ENCODE measurements at regions of chr1 and their contacts with region 1.

Region 1: GRCh38 chr1:3483801-3484444 is 29.5 kb downstream of the ARHGEF16 start:
- DNase-seq: peak; percentile 61 to 89 (median 88)
- ATAC-seq: peak; percentile 84
- H3K4me3 ChIP-seq: no peak overlapping the region
- H3K27ac ChIP-seq: no peak overlapping the region
- H3K4me1 ChIP-seq: peaks cover 0 to 39% of the 10 kb centered on the region in 2 experiments; a peak in 2 of 5 replicates
- H3K27me3 ChIP-seq: peaks cover 12 to 26% of the 10 kb centered on the region in 2 experiments
- CTCF ChIP-seq: peak; percentile 83 to 95 (median 89)
- EP300 ChIP-seq: no peak
- POLR2A ChIP-seq: no peak
- RAD21 ChIP-seq: peak in 1 of 2 experiments; percentile 80; a peak in 3 of 4 replicates

Region 2: GRCh38 chr1:3441410-3441847 is 42.5 kb before region 1 on chr1:
- CTCF ChIA-PET with region 1: interaction called, 4 read pairs
- POLR2A ChIA-PET with region 1: no interaction called
- in situ Hi-C with region 1: loop called (anchors 5 kb)
- intact Hi-C with region 1: no loop called
- DNase-seq: no peak
- ATAC-seq: no peak
- H3K4me3 ChIP-seq: no peak overlapping the region
- H3K27ac ChIP-seq: no peak overlapping the region
- H3K4me1 ChIP-seq: peaks cover 0 to 6% of the 10 kb centered on the region in 2 experiments; a peak in 1 of 5 replicates
- H3K27me3 ChIP-seq: peaks cover 30 to 65% of the 10 kb centered on the region in 2 experiments; a peak in 4 of 5 replicates
- CTCF ChIP-seq: no peak
- EP300 ChIP-seq: no peak
- POLR2A ChIP-seq: no peak
- RAD21 ChIP-seq: no peak

Region 3: DNA sequence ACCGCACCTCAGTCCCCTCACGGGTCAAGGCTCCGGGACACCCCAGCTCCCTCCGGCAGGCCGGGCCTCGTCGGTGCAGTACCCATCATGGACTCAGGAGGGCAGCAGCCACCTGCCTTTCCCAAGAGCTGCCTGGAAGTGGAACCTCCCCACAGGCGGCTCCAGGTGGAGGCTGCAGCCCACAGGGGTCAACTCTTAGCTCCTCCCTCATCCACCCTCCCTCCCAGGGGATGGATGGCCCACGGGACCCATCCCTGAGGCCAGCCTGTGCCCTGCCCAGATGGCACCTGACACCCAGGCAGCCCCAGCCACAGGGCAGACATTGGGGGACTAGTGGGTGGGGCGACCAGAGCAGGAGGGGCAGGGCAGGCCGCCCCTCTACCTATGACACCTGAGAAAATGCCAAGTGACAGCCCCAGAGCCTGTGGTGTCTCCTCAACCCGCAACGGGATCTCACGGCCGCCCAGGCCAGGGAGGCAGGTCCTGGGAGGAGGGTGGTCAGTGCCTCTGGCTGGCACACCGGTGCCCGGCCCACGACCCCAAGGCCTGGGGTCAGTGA is 30.6 kb before region 1 on chr1:
- CTCF ChIA-PET with region 1: interaction called, 91 read pairs
- POLR2A ChIA-PET with region 1: interaction called, 3 read pairs
- in situ Hi-C with region 1: loop called (anchors 5 kb)
- intact Hi-C with region 1: loop called (anchors 1 kb)
- DNase-seq: peak; percentile 84 to 91 (median 90)
- ATAC-seq: peak; percentile 86
- H3K4me3 ChIP-seq: no peak overlapping the region
- H3K27ac ChIP-seq: no peak overlapping the region
- H3K4me1 ChIP-seq: peaks cover 0 to 39% of the 10 kb centered on the region in 2 experiments; a peak in 3 of 5 replicates
- H3K27me3 ChIP-seq: peaks cover 5 to 28% of the 10 kb centered on the region in 2 experiments; a peak in 4 of 5 replicates
- CTCF ChIP-seq: peak; percentile 96 to 98 (median 97)
- EP300 ChIP-seq: no peak
- POLR2A ChIP-seq: no peak
- RAD21 ChIP-seq: peak; percentile 80 to 96

Region 4: GRCh38 chr1:3649342-3650247 is 165.7 kb after region 1 on chr1 and contains the start of gene WRAP73:
- CTCF ChIA-PET with region 1: no interaction called
- POLR2A ChIA-PET with region 1: no interaction called
- in situ Hi-C with region 1: no loop called
- intact Hi-C with region 1: no loop called
- DNase-seq: peak; percentile 93 to 98 (median 94)
- ATAC-seq: peak; percentile 96
- H3K4me3 ChIP-seq: peak within 1 kb of the TSS; percentile 70
- H3K27ac ChIP-seq: peak within 1 kb of the TSS; percentile 29; the same call in 2 of the 3 replicates
- H3K4me1 ChIP-seq: peaks cover 11 to 38% of the 10 kb centered on the region in 2 experiments
- H3K27me3 ChIP-seq: peaks cover 19 to 25% of the 10 kb centered on the region in 2 experiments; a peak in 4 of 5 replicates
- CTCF ChIP-seq: peak; percentile 63 to 66 (median 64); a peak in 5 of 6 replicates
- EP300 ChIP-seq: peak; percentile 23; the same call in 1 of the 2 replicates
- POLR2A ChIP-seq: peak; percentile 83
- RAD21 ChIP-seq: peak in 1 of 2 experiments; percentile 36; a peak in 2 of 4 replicates
- polyA plus RNA-seq, gene WRAP73: 4.3 to 4.7 TPM